Head of caudate nucleus (tissue), 42 donors: ENCODE measurements at regions of chr14 and their contacts with region 1.

Region 1: GRCh38 chr14:70972107-70972976 is 65.1 kb downstream of the PCNX1 start:
- DNase-seq: peak; percentile 47 to 97 (median 90)

Region 2: GRCh38 chr14:70780396-70781075 is 191.8 kb before region 1 on chr14:
- intact Hi-C with region 1: no loop called
- DNase-seq: peak in 31 of 42 donors; percentile 5 to 62 (median 29)

Region 3: DNA sequence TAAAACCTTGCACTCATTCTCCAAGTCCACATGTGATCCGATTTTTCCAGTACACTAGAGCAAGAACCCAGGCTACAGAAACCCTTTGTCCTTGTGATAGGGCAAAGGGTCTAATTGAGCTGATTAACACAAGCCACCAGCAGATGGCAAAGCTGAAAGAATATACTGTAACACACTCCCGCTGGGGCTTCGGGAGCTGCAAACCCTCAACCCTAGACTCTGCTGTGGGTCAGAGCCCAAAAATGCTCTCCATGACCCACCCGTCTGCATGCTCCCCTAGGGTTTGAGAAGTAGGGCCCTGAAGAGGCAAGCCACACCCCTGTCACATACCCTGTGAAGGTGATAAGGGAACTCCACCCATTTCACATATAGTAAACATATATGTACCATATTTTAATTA is 98.7 kb before region 1 on chr14:
- intact Hi-C with region 1: no loop called
- DNase-seq: no peak

Region 4: GRCh38 chr14:70907176-70907995 is 65.0 kb before region 1 on chr14 and contains the start of gene PCNX1:
- intact Hi-C with region 1: loop called (anchors 5 kb)
- DNase-seq: peak; percentile 61 to 95 (median 90)

Region 5: DNA sequence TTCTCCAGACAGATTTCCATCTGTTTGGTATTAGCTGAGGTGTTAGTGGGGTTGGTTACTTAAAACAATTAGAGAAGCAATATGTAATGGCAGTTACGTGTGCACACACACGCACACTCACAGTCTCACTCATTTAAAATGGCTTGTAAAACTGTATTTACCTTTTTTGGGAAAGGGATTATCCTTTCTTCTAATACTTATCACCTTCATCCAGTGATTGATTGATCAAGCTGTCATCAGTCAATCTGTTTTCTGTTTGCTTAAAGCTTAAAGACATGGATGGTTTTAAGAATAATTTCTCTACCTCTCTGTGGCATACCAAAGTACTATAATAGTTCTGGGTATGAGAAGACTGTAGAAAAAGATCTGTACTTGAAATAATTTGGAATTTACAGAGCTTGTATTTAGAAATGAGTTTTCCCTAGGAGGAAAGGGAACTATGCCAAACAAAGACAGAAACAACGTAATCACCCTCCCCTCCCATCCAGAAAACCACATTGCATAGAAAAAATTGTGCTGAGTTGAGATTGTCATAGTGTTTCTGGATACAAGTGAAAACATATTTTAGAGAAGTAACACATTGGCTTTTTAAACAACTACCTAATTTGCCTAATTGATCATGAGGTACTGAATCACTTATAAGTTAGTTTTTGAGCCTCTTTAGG is 390.7 kb after region 1 on chr14:
- intact Hi-C with region 1: no loop called
- DNase-seq: no peak